ENCODE measurements at regions of chr1 and their contacts with region 1.

Region 1: DNA sequence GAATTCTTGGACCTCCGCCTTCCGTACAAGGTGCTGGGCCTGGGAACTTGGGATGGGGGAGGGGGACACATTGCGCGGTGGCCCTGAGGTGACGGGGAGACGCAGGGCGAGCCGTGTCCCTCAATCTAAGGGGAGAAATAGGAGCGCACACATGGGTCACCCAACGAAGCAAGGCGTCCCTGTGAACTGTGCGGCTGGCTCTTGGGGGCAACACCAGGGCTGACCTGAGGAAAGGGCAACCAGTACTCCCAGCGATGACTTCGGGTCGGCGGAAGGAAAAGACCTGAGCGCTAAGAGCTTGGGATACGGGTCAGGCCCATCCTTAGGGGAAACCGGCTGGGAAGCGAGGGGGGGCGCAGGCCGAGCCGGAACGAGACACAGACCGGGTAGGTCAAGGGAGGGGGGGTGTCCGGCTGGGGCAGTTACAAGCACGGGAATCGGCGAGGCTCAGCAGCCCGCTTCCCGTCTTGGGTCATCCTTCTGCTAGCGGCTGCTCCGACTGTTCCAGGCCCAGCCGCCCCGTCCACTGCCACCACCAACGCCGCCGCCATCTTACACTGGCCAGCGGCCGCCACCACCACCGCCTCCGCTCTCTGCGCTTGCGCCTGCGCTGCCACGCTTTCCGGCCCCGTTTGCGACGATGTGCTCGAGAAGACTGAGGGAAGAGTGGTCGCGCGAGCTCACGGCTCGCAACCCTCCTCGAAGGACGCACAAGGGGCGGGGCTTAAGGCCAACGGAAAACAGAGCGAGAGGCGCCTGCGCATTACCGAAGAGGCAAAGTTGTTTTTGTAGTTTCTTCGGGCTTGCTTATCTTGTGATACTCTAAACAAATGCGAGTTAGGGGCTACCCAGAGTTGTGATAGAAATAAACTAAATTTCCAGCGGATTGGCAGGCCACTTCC is at the start of gene DCAF8:
- DNase-seq: peak; percentile 99
- ATAC-seq: peak; percentile 88
- H3K4me3 Mint-ChIP-seq: peak within 1 kb of the TSS; percentile 100
- H3K27ac Mint-ChIP-seq: peak within 1 kb of the TSS; percentile 99
- H3K4me1 Mint-ChIP-seq: peaks cover 44% of the 10 kb centered on the region
- H3K27me3 Mint-ChIP-seq: no peaks in the 10 kb centered on the region
- total RNA-seq, gene DCAF8: 116 to 135 TPM

Region 2: DNA sequence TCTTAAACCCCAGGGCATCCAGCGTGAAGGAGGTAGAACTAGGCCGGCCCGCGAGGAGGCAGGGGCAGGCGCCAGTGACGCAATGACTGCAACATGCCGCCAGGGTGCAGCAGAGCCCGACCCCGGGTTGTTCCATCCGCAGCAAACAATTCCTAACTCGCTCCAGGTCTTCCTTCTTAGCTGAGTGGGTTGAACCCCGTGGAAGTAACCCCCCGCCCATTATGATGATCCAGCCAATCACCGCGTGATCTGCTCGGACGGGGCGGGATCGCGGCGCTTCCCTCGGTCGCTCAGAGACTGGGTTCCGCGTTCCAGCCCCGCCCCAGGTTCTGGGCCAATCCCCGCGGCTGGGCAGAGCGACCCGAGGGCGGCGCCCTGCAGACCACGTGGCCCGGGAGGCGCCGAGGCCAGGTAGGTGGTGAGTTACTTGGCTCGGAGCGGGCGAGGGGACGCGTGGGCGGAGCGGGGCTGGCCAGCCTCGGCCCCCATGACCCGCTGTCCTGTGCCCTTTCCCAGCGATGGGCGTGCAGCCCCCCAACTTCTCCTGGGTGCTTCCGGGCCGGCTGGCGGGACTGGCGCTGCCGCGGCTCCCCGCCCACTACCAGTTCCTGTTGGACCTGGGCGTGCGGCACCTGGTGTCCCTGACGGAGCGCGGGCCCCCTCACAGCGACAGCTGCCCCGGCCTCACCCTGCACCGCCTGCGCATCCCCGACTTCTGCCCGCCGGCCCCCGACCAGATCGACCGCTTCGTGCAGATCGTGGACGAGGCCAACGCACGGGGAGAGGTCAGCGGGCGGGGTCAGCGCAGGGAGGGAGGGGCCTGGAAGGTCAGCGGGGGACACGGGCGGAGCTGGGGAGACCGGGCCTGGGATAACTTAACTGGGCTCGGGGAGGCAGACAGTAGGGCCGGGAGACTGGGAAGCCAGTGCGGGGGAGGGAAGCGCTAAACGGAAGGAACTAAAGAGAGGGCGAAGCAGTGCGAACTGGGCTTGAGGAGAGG is 481.3 kb before region 1 on chr1 and contains the start of gene DUSP23:
- CTCF ChIA-PET with region 1: interaction called, 3 read pairs
- POLR2A ChIA-PET with region 1: no interaction called
- intact Hi-C with region 1: loop called in 1 of 2 experiments (anchors 5 kb)
- DNase-seq: peak; percentile 97
- ATAC-seq: peak; percentile 99
- H3K4me3 Mint-ChIP-seq: peak within 1 kb of the TSS; percentile 70
- H3K27ac Mint-ChIP-seq: peak within 1 kb of the TSS; percentile 14
- H3K4me1 Mint-ChIP-seq: peaks cover 12% of the 10 kb centered on the region
- H3K27me3 Mint-ChIP-seq: peaks cover 2% of the 10 kb centered on the region
- total RNA-seq, gene DUSP23: 23.9 to 26.8 TPM

Region 3: GRCh38 chr1:160124705-160125478 is 137.3 kb before region 1 on chr1:
- CTCF ChIA-PET with region 1: no interaction called
- POLR2A ChIA-PET with region 1: no interaction called
- intact Hi-C with region 1: no loop called
- DNase-seq: no peak
- ATAC-seq: no peak
- H3K4me3 Mint-ChIP-seq: no peak overlapping the region
- H3K27ac Mint-ChIP-seq: no peak overlapping the region
- H3K4me1 Mint-ChIP-seq: no peaks in the 10 kb centered on the region
- H3K27me3 Mint-ChIP-seq: peaks cover 2% of the 10 kb centered on the region

Region 4: DNA sequence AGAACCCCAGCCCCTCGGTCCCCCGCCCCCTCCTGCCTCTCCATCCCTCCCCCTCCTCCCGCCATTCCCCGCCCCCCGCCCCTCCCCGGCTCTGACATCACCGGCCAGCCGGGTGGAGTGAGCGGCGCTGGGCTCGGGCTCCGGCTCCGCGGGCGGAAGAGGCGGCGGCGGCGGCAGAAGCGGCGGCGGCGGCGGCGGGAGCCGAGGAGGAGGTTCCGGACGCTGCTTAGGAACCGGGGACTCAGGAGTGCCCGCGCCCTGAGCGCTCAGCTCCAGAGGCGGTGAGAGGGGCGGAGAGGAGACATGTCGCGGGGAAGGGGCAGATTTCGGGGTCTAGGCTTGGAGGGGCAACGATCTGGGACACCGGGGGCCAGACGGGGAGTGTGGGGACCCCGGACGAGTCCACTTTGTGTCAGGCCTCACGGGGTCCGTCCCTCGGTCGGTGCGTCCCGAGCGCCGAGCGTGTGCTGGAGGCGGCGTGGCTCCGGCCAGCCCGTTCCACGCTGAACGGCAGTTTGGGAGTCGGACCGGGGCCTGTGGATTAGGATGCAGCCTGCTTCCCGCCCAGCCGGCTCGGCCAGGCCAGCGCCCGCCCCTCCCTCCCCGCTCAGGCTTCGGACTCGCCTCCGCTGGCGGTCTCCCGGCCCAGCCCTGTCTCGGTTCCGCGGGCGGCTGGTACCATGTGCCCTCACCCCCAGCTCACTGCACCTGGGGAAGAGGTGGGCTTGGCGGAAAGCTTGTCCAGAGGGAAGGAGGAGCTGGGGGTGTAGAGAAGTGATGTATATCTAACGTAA is 56.7 kb before region 1 on chr1 and contains the start of gene PEA15:
- CTCF ChIA-PET with region 1: no interaction called
- POLR2A ChIA-PET with region 1: interaction called, 6 read pairs
- intact Hi-C with region 1: loop called in 1 of 2 experiments (anchors 1 kb)
- DNase-seq: peak; percentile 83
- ATAC-seq: peak; percentile 76
- H3K4me3 Mint-ChIP-seq: peak within 1 kb of the TSS; percentile 81
- H3K27ac Mint-ChIP-seq: peak within 1 kb of the TSS; percentile 86
- H3K4me1 Mint-ChIP-seq: peaks cover 47% of the 10 kb centered on the region
- H3K27me3 Mint-ChIP-seq: no peaks in the 10 kb centered on the region
- total RNA-seq, gene PEA15: 42.5 to 63.4 TPM

Region 5: DNA sequence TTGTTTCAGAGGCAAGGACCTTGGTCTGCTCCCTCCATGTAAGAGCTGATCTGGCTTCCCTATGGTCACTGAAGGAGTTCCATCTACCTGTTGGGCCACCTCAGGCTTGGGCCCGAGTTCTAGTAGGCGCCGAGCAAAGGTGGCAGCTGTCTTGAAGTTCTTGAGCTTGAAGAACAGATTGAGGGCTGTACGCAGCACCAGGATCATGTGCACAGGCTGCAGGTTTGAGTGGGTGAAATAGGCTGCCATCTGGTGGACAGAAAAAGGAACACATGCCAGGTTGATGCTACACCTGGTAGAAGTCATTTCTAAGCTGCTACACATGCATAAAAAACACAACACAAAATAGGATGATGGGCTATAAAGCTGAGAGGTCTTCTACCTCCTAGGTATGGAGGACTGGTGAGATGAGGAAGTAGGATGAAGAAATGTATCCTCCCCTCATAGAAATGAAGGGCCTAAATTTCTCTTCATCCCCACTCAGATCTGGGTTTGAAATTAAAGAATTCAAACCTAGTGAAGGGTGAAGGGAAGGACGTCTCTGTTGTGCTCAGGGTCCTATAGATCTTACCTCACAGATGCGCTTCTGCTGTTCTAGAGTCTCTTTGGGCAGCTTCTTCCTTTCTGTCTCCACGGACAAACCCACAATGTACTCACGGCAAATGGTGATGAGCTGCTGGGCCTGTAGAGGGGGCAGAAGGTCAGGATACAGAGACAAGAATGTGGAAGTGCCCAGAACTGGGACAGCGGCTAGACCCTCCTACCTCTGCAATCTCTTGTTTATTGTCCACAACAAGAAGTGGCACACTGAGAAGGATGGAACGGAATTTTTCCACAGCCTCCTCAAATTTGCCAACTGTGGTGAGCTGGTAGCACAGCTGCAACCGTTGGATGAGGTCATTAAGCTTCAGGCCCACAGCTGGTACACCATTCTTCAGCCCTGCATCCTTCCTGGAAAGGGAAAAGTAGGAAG is 29.4 kb after region 1 on chr1:
- CTCF ChIA-PET with region 1: interaction called, 15 read pairs
- POLR2A ChIA-PET with region 1: interaction called, 4 read pairs
- intact Hi-C with region 1: no loop called
- DNase-seq: peak; percentile 76
- ATAC-seq: peak; percentile 98
- H3K4me3 Mint-ChIP-seq: no peak overlapping the region
- H3K27ac Mint-ChIP-seq: no peak overlapping the region
- H3K4me1 Mint-ChIP-seq: peaks cover 2% of the 10 kb centered on the region
- H3K27me3 Mint-ChIP-seq: no peaks in the 10 kb centered on the region

Region 6: DNA sequence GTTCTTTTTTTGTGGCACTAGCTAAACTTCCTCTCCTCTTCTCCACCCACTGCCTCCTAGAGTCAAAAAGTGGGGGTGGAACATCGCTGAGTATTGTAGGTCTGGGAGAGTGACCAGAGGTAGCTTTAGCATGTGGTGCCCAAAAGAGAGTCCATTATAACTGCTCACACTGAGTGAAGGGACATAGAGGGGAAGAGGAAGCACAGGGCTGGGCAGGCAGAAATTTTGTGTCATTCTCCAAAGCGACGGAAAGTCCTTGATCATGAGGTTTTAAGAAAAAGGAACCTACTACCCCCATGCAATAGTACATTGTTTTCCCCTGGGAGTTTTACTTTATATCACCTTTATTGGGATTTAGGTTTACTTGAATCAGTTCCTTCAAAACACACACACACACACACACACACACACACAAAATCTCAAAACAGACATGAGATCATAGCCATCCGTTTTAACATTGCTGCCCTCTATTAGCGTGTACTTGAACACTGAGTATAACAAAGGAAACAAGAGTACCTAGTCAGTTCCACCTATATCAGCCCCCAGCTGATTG is 313.0 kb after region 1 on chr1:
- CTCF ChIA-PET with region 1: no interaction called
- POLR2A ChIA-PET with region 1: no interaction called
- intact Hi-C with region 1: loop called in 1 of 2 experiments (anchors 5 kb)
- DNase-seq: peak; percentile 28
- ATAC-seq: peak; percentile 50
- H3K4me3 Mint-ChIP-seq: peak overlapping the region; percentile 77
- H3K27ac Mint-ChIP-seq: peak overlapping the region; percentile 96
- H3K4me1 Mint-ChIP-seq: peaks cover 89% of the 10 kb centered on the region
- H3K27me3 Mint-ChIP-seq: no peaks in the 10 kb centered on the region

Measured in activated CD4-positive, alpha-beta T cell treated with anti-CD3 and anti-CD28 coated beads for 36 hours (primary cell).